ENCODE measurements at regions of chr1 and their contacts with region 1.

Region 1: DNA sequence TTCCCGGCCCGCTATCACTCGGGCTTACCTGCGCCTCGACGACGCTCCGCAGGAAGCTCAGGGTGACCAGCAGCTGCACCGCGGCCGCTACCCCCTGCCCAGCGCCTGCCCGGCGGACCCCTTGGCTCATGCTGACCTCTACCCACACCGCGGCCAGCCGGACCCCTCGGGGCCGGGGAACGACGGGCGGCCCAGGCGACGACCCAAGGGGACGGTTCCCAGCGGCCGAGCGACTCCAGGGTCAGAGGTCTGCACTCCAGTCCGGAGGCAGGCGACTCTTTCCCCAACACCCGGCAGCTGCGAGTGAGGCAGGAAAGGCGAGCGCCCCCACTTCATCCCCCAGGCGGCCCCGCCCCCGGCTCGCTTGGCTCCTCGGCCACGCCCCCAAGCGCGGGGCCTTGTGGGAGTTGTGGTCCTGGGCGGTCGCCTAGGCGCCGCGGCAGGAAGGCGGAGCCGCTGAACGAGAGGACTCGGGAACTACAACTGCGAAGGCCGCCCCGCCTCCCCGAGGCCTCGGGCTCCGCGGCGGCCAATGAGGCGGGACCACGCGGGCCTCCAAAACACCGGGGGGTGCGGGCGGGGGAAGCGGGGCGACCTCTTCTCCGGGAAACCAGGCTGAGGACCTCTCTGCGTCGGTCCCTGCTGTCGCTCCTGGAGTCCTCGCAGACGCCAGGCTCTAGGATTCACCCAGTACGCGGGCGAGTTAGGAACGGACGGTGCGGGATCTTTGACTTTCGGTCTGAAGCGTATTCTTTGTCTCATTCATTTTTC is at the start of gene ERO1B:
- DNase-seq: peak; percentile 92
- ATAC-seq: peak; percentile 95
- H3K4me3 ChIP-seq: peak within 1 kb of the TSS; percentile 84
- H3K27ac ChIP-seq: no peak within 1 kb of the TSS
- H3K4me1 ChIP-seq: peaks cover 7% of the 10 kb centered on the region; the same call in 1 of the 2 replicates
- H3K27me3 ChIP-seq: no peaks in the 10 kb centered on the region
- CTCF ChIP-seq: no peak
- total RNA-seq, gene ERO1B: 0.46 and 0.95 TPM in 2 replicates

Region 2: GRCh38 chr1:236108027-236108648 is 173.7 kb before region 1 on chr1:
- CTCF ChIA-PET with region 1: interaction called, 3 read pairs
- POLR2A ChIA-PET with region 1: no interaction called
- intact Hi-C with region 1: loop called (anchors 2 kb)
- DNase-seq: no peak
- ATAC-seq: no peak
- H3K4me3 ChIP-seq: no peak overlapping the region
- H3K27ac ChIP-seq: no peak overlapping the region
- H3K4me1 ChIP-seq: no peaks in the 10 kb centered on the region
- H3K27me3 ChIP-seq: no peaks in the 10 kb centered on the region
- CTCF ChIP-seq: no peak

Region 3: DNA sequence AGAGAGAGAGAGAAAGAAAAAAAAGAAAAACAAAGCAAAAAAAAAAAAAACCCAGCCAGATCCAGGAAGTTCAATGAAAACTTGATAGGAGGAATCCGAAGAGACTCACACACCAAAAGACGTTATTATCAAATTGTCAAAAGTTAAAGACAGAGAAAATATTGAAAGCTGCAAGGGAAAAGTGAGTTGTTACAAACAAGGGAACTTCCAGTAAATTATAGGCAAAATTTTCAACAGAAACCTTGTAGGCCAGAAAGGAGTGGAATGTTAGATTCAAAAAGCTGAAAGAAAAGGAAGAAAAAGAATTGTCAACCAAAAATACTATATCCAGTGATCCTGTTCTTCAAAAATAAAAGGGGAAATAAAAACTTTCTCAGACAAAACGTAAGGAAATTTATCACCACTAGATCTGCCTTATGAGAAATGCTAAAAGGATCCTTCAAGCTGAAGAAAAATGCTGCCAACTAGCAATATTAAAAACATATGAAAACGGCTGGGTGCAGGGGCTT is 23.7 kb before region 1 on chr1:
- CTCF ChIA-PET with region 1: no interaction called
- POLR2A ChIA-PET with region 1: no interaction called
- intact Hi-C with region 1: loop called (anchors 1 kb)
- DNase-seq: no peak
- ATAC-seq: no peak
- H3K4me3 ChIP-seq: no peak overlapping the region
- H3K27ac ChIP-seq: no peak overlapping the region
- H3K4me1 ChIP-seq: no peaks in the 10 kb centered on the region
- H3K27me3 ChIP-seq: no peaks in the 10 kb centered on the region
- CTCF ChIP-seq: no peak

Region 4: GRCh38 chr1:236320671-236321070 is 38.8 kb after region 1 on chr1:
- CTCF ChIA-PET with region 1: no interaction called
- POLR2A ChIA-PET with region 1: no interaction called
- intact Hi-C with region 1: no loop called
- DNase-seq: no peak
- ATAC-seq: no peak
- H3K4me3 ChIP-seq: no peak overlapping the region
- H3K27ac ChIP-seq: no peak overlapping the region
- H3K4me1 ChIP-seq: no peaks in the 10 kb centered on the region
- H3K27me3 ChIP-seq: no peaks in the 10 kb centered on the region
- CTCF ChIP-seq: no peak

Measured in PC-3 (cell line).